PC-9 (cell line): ENCODE measurements at regions of chr4 and their contacts with region 1.

Region 1: GRCh38 chr4:153153339-153153871 is 50.8 kb upstream of the TRIM2 start:
- DNase-seq: peak; percentile 36 to 63
- H3K4me3 ChIP-seq: peak overlapping the region; percentile 77
- H3K27ac ChIP-seq: no peak overlapping the region; the same call in 1 of the 2 replicates
- H3K4me1 ChIP-seq: peaks cover 15% of the 10 kb centered on the region
- H3K27me3 ChIP-seq: no peaks in the 10 kb centered on the region
- CTCF ChIP-seq: no peak

Region 2: DNA sequence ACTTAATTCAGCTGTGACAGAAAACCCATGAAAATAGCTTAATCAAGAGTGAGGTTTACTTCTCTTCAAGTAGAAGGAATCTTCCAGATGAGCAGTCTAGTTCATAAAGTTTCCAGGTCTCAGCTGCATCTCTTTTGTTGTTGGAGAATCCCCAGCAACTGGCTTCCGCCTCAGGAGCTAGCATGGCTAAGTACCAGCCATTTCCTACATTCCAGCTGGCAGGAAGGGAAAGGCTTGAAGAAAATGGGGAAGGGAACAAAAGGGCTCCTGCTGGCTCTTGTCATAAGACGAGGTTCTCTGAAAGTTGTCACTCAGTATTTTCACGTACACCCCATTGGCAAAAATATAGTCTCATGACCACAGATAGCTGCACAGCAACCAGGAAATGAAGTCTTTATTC is 23.5 kb after region 1 on chr4:
- CTCF ChIA-PET with region 1: no interaction called
- POLR2A ChIA-PET with region 1: interaction called, 10 read pairs
- intact Hi-C with region 1: no loop called
- DNase-seq: no peak
- H3K4me3 ChIP-seq: no peak overlapping the region
- H3K27ac ChIP-seq: no peak overlapping the region
- H3K4me1 ChIP-seq: no peaks in the 10 kb centered on the region
- H3K27me3 ChIP-seq: no peaks in the 10 kb centered on the region
- CTCF ChIP-seq: no peak

Region 3: GRCh38 chr4:153241970-153242838 is 88.8 kb after region 1 on chr4:
- CTCF ChIA-PET with region 1: no interaction called
- POLR2A ChIA-PET with region 1: no interaction called
- intact Hi-C with region 1: no loop called
- DNase-seq: no peak
- H3K4me3 ChIP-seq: no peak overlapping the region
- H3K27ac ChIP-seq: no peak overlapping the region
- H3K4me1 ChIP-seq: peaks cover 6% of the 10 kb centered on the region; the same call in 1 of the 2 replicates
- H3K27me3 ChIP-seq: no peaks in the 10 kb centered on the region
- CTCF ChIP-seq: no peak